Stomach (tissue), 19 donors: ENCODE measurements at regions of chr7 and their contacts with region 1.

Region 1: GRCh38 chr7:55255496-55256435 is 109.4 kb upstream of the LANCL2 start:
- DNase-seq: peak; percentile 90 to 95
- H3K4me3 ChIP-seq: peak overlapping the region; percentile 48 to 74 (median 67)
- H3K27ac ChIP-seq: peak overlapping the region in 3 of 5 donors; percentile 3 to 78 (median 46)
- H3K4me1 ChIP-seq: peaks cover 11 to 22% (median 20%) of the 10 kb centered on the region in 4 donors
- H3K27me3 ChIP-seq: peaks cover 0 to 50% (median 17%) of the 10 kb centered on the region in 3 donors
- CTCF ChIP-seq: peak in 5 of 7 experiments; percentile 72 to 94 (median 84)
- EP300 ChIP-seq: no peak
- POLR2A ChIP-seq: no peak

Region 2: GRCh38 chr7:54778696-54779540 is 476.8 kb before region 1 on chr7:
- intact Hi-C with region 1: loop called (anchors 5 kb)
- DNase-seq: no peak
- H3K4me3 ChIP-seq: no peak overlapping the region
- H3K27ac ChIP-seq: no peak overlapping the region
- H3K4me1 ChIP-seq: peaks cover 0 to 5% (median 2%) of the 10 kb centered on the region in 4 donors
- H3K27me3 ChIP-seq: no peaks in the 10 kb centered on the region
- CTCF ChIP-seq: no peak
- EP300 ChIP-seq: no peak
- POLR2A ChIP-seq: no peak

Region 3: GRCh38 chr7:55018361-55019190 is 237.2 kb before region 1 on chr7 and contains the start of gene EGFR:
- intact Hi-C with region 1: loop called (anchors 10 kb)
- DNase-seq: peak; percentile 82 to 93
- H3K4me3 ChIP-seq: peak within 1 kb of the TSS; percentile 70 to 83 (median 82)
- H3K27ac ChIP-seq: peak within 1 kb of the TSS; percentile 93 to 97 (median 95)
- H3K4me1 ChIP-seq: peaks cover 9 to 45% (median 28%) of the 10 kb centered on the region in 4 donors
- H3K27me3 ChIP-seq: peaks cover 0 to 28% (median 11%) of the 10 kb centered on the region in 3 donors
- CTCF ChIP-seq: no peak
- EP300 ChIP-seq: no peak
- POLR2A ChIP-seq: no peak
- total RNA-seq, gene EGFR: 31.7 to 43.4 (median 35.2) TPM

Region 4: GRCh38 chr7:55110661-55111361 is 145.0 kb before region 1 on chr7:
- intact Hi-C with region 1: no loop called
- DNase-seq: peak in 1 of 2 donors; percentile 58
- H3K4me3 ChIP-seq: no peak overlapping the region
- H3K27ac ChIP-seq: peak overlapping the region in 3 of 5 donors; percentile 19 to 66 (median 29)
- H3K4me1 ChIP-seq: peaks cover 15 to 82% (median 46%) of the 10 kb centered on the region in 4 donors
- H3K27me3 ChIP-seq: no peaks in the 10 kb centered on the region
- CTCF ChIP-seq: no peak
- EP300 ChIP-seq: no peak
- POLR2A ChIP-seq: no peak

Region 5: DNA sequence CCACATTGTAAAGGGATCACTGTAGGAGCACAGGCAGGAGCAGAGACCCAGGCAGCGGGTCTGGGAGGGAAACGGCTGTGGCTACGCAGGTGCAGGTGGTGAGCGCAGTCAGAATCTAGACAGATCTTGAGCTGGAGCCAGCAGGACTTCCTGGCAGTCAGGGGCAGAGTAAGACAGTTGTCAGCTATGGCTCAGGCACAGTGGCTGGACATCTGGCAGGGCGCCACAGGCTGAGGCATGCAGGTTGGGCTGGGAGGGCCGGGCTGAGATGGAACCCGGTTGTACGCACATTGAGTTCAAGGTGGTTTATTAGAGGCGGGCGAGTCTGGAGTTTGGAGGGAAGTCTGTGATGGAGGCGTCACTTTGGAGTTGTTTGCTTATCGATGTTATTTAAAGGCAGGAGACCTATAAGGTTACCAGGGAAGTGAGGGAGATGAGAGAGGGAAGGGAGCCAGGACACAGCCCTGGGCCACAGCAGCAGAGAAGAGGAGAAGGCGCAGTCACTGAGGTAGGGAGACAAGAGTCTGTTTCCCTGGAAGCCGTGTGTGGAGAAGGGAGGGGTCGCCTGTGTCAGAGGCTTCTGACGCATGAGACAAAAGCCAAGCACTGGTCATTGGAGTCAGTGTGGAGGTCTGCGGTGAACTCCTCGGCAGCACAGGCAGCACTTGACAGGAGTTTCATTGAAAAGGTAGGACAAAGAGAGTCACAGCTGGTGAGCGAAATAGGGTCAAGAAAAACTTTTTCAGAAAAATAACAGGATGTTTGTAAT is 183.2 kb after region 1 on chr7:
- intact Hi-C with region 1: no loop called
- DNase-seq: peak in 1 of 2 donors; percentile 72
- H3K4me3 ChIP-seq: no peak overlapping the region
- H3K27ac ChIP-seq: no peak overlapping the region
- H3K4me1 ChIP-seq: peaks cover 0 to 5% (median 0%) of the 10 kb centered on the region in 4 donors
- H3K27me3 ChIP-seq: no peaks in the 10 kb centered on the region
- CTCF ChIP-seq: no peak
- EP300 ChIP-seq: no peak
- POLR2A ChIP-seq: no peak